GM12878 (cell line): ENCODE measurements at regions of chr10 and their contacts with region 1.

Region 1: GRCh38 chr10:21919906-21920305 is 83.6 kb downstream of the DNAJC1 start:
- DNase-seq: no peak
- ATAC-seq: no peak
- H3K4me3 ChIP-seq: no peak overlapping the region
- H3K27ac ChIP-seq: no peak overlapping the region
- H3K4me1 ChIP-seq: no peaks in the 10 kb centered on the region
- H3K27me3 ChIP-seq: no peaks in the 10 kb centered on the region
- CTCF ChIP-seq: no peak
- EP300 ChIP-seq: no peak
- POLR2A ChIP-seq: no peak
- RAD21 ChIP-seq: no peak

Region 2: DNA sequence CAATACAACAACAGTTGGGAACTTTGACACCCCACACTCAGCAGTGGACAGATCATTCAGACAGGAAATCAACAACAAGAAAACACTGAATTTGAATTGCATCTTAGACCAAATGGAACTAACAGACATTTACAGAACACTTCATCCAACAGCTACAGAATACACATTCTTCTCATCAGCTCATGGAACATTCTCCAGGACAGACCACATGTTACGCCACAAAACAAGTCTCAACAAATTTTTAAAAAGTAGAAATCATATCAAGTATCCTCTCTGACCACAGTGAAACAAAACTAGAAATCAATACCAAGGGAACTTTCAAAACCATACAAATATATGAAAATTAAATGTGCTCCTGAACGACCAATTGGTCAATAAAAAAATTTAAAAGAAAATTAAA is 128.6 kb before region 1 on chr10:
- CTCF ChIA-PET with region 1: no interaction called
- POLR2A ChIA-PET with region 1: no interaction called
- RAD21 ChIA-PET with region 1: no interaction called
- SMC1A ChIA-PET with region 1: no interaction called
- in situ Hi-C with region 1: no loop called
- intact Hi-C with region 1: no loop called
- DNase-seq: no peak
- ATAC-seq: no peak
- H3K4me3 ChIP-seq: no peak overlapping the region
- H3K27ac ChIP-seq: no peak overlapping the region
- H3K4me1 ChIP-seq: no peaks in the 10 kb centered on the region
- H3K27me3 ChIP-seq: no peaks in the 10 kb centered on the region
- CTCF ChIP-seq: no peak
- EP300 ChIP-seq: no peak
- POLR2A ChIP-seq: no peak
- RAD21 ChIP-seq: no peak

Region 3: DNA sequence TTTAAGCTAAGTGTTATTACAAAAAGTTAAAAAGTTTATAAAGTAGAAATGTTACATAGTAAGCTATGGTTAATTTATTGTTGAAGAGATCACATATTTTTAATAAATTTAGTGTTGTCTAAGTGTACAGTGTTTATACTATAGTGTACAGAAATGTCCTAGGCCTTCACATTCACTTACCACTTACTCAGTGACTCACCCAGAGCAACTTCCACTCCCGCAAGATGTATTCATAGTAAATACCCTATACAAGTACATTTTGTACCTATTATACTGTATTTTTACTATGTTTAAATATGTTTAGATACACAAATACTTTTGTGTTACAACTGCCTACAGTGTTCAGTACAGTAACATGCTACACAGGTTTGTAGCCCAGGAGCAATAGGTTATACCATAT is 14.4 kb after region 1 on chr10:
- CTCF ChIA-PET with region 1: interaction called, 4 read pairs
- POLR2A ChIA-PET with region 1: no interaction called
- RAD21 ChIA-PET with region 1: interaction called, 3 read pairs
- SMC1A ChIA-PET with region 1: interaction called, 28 read pairs
- in situ Hi-C with region 1: no loop called
- intact Hi-C with region 1: no loop called
- DNase-seq: no peak
- ATAC-seq: no peak
- H3K4me3 ChIP-seq: no peak overlapping the region
- H3K27ac ChIP-seq: no peak overlapping the region
- H3K4me1 ChIP-seq: no peaks in the 10 kb centered on the region
- H3K27me3 ChIP-seq: no peaks in the 10 kb centered on the region
- CTCF ChIP-seq: no peak
- EP300 ChIP-seq: no peak
- POLR2A ChIP-seq: no peak
- RAD21 ChIP-seq: no peak